H1 (cell line): ENCODE measurements at regions of chr16 and their contacts with region 1.

Region 1: DNA sequence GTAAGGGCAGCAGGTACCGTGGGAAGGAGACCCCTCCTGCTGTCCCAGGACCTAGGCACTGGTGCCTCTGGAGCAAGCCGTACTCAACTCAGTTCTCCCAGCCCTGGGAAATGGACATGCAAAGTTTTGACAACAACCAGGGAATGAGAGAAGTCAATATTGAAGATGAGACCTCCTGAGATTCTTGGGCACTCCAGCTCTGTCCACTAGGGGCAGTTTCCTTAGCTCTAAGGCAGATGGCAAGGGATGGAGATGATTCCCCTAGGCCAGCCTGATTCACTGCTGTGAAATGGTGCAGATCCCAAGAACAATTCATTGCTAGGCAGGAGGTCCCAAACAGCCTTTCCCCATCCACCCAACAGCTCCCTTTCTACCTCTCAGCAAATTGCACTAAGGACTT is 20.6 kb upstream of the SDR42E2 start:
- DNase-seq: peak in 1 of 2 experiments; percentile 59
- H3K4me3 ChIP-seq: no peak overlapping the region
- H3K27ac ChIP-seq: no peak overlapping the region
- H3K4me1 ChIP-seq: no peaks in the 10 kb centered on the region
- H3K27me3 ChIP-seq: no peaks in the 10 kb centered on the region; a peak in 1 of 7 replicates
- CTCF ChIP-seq: peak; percentile 44 to 88 (median 65)
- EP300 ChIP-seq: no peak
- POLR2A ChIP-seq: no peak
- RAD21 ChIP-seq: peak; percentile 11 to 39; a peak in 3 of 4 replicates

Region 2: DNA sequence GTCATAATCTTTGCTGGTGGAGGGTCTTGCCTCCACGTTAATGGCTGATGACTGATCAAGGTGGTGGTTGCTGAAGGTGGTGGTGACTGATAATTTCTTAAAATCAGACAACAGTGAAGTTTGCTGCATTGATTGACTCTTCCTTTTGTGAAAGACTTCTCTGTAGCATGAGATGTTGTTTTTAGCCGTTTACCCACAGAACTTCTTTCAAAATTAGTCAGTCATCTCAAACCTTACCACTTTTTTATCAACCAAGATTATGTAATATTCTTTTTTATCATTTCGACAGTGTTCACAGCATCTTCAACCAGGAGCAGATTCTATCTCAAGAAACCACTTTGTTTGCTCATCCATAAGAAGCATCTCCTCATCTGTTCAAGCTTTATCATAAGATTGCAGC is 182.7 kb before region 1 on chr16:
- CTCF ChIA-PET with region 1: no interaction called
- POLR2A ChIA-PET with region 1: no interaction called
- DNase-seq: no peak
- H3K4me3 ChIP-seq: no peak overlapping the region
- H3K27ac ChIP-seq: no peak overlapping the region
- H3K4me1 ChIP-seq: peaks cover 0 to 2% (median 0%) of the 10 kb centered on the region in 4 experiments; a peak in 3 of 7 replicates
- H3K27me3 ChIP-seq: no peaks in the 10 kb centered on the region
- CTCF ChIP-seq: no peak
- EP300 ChIP-seq: no peak
- POLR2A ChIP-seq: no peak
- RAD21 ChIP-seq: no peak

Region 3: DNA sequence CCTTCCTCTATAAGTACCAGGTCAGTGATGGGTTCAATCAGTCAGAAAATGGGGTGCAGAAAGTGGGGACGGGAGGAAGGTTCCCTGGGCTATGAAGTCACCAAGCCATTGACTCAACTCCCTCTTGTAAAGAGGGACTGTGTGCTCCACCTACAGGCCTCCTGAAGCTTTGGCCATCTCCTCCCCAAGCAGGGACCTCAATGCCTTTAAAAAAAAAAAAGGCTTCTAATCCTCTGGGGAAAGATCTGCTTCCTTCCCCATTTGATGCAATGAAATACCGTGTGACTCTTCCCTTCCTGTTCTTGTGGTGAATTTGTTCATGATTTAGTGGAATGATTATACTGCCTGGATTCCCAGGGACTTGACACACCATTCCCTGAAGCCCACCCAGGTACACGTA is 18.6 kb before region 1 on chr16:
- CTCF ChIA-PET with region 1: interaction called, 16 read pairs
- POLR2A ChIA-PET with region 1: no interaction called
- DNase-seq: no peak
- H3K4me3 ChIP-seq: no peak overlapping the region
- H3K27ac ChIP-seq: no peak overlapping the region
- H3K4me1 ChIP-seq: no peaks in the 10 kb centered on the region
- H3K27me3 ChIP-seq: no peaks in the 10 kb centered on the region
- CTCF ChIP-seq: peak in 2 of 3 experiments; percentile 26 to 49; a peak in 3 of 4 replicates
- EP300 ChIP-seq: no peak
- POLR2A ChIP-seq: no peak
- RAD21 ChIP-seq: peak; percentile 44 to 48; a peak in 3 of 4 replicates

Region 4: GRCh38 chr16:22161999-22162655 is 20.4 kb after region 1 on chr16 and contains the start of gene SDR42E2:
- CTCF ChIA-PET with region 1: interaction called, 32 read pairs
- POLR2A ChIA-PET with region 1: interaction called, 5 read pairs
- DNase-seq: peak; percentile 19 to 80
- H3K4me3 ChIP-seq: peak within 1 kb of the TSS; percentile 23 to 61 (median 46)
- H3K27ac ChIP-seq: no peak within 1 kb of the TSS
- H3K4me1 ChIP-seq: no peaks in the 10 kb centered on the region
- H3K27me3 ChIP-seq: peaks cover 0 to 21% (median 14%) of the 10 kb centered on the region in 4 experiments; a peak in 6 of 7 replicates
- CTCF ChIP-seq: no peak
- EP300 ChIP-seq: no peak
- POLR2A ChIP-seq: no peak
- RAD21 ChIP-seq: no peak
- total RNA-seq, gene SDR42E2: not detected in 2 replicates

Region 5: GRCh38 chr16:22174642-22175041 is 32.9 kb after region 1 on chr16:
- CTCF ChIA-PET with region 1: interaction called, 10 read pairs
- POLR2A ChIA-PET with region 1: no interaction called
- DNase-seq: no peak
- H3K4me3 ChIP-seq: no peak overlapping the region
- H3K27ac ChIP-seq: no peak overlapping the region
- H3K4me1 ChIP-seq: no peaks in the 10 kb centered on the region
- H3K27me3 ChIP-seq: no peaks in the 10 kb centered on the region
- CTCF ChIP-seq: no peak
- EP300 ChIP-seq: no peak
- POLR2A ChIP-seq: no peak
- RAD21 ChIP-seq: no peak

Region 6: DNA sequence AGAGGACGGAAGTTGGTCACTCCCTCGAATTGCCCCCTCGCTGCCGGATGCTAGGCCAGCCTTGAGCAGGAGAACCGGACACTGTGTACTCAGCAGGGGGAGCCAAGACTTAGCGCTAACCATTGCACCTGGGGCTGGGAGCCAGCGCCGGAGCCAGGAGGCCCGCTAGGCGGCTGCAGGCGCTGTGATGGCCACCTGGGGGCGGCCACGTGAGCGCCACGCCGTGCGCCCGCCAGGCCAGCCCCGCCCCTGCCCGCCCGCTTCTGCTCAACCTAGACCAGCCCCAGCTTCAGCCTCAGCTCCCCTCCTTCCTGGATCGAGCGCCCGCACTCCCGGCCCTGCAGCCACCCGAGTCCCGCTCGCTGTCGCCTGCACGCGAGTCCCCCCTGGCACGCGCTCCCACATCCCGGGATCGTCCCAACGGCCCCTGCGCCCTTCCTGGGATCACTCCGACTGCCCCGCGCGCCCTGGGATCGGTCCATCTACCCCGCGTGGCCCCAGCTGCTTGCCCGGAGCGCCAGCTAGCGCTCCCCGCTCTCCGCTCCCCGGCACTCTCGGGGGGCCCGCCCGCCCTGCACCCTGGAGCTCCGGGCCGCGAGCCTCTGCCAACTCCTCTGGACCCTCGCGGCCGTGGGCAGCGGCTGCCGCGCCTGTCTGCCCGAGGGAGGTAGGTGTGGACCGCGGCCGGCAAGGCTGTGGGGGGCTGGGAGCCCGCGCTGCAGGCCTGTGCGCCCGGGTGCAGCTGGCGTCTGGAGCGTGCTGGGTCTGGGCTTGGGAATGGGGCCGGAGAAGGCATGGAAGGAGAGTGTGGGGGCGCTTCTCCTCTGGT is 64.5 kb after region 1 on chr16 and contains the start of gene EEF2K:
- CTCF ChIA-PET with region 1: no interaction called
- POLR2A ChIA-PET with region 1: no interaction called
- DNase-seq: peak; percentile 83 to 89
- H3K4me3 ChIP-seq: peak within 1 kb of the TSS; percentile 65 to 85 (median 76)
- H3K27ac ChIP-seq: no peak within 1 kb of the TSS
- H3K4me1 ChIP-seq: peaks cover 0 to 7% (median 4%) of the 10 kb centered on the region in 4 experiments; a peak in 4 of 7 replicates
- H3K27me3 ChIP-seq: no peaks in the 10 kb centered on the region
- CTCF ChIP-seq: peak; percentile 69 to 86 (median 76)
- EP300 ChIP-seq: peak in 1 of 2 experiments; percentile 39; a peak in 1 of 3 replicates
- POLR2A ChIP-seq: peak in 1 of 2 experiments; percentile 53; a peak in 1 of 3 replicates
- RAD21 ChIP-seq: peak; percentile 33 to 63
- total RNA-seq, gene EEF2K: 30.2 and 30.5 TPM in 2 replicates